ENCODE measurements at regions of chr3 and their contacts with region 1.

Region 1: DNA sequence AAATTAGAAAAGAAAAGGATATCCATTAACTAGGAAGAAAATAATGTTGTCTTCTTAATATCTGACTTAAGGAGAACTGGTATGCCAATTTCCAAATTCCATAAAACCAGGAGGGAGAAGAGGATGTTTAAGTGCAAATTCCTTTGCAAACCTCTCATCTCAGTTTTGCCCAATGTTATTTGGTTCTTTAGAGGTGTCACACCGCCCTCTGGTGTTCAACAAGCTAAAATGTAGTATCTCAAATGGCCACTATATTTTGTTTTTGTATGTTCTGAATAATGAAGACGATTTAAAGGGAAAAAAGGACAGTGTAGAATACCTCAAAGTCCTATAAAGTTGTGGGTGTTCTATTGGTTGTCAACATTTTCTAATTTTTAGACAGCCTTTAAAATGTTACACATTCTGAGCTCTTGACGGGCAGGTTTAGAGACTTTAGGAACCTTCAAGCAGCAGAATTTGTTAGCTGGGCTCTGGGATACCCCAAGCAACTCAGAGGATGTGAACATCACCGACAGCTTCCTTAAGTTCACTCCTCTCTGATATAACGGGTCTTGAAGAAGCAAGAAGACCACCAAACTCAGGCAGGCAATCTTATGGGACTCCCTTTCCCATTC is 458.3 kb downstream of the MFSD1 start:
- DNase-seq: no peak
- ATAC-seq: no peak
- H3K4me3 Mint-ChIP-seq: no peak overlapping the region
- H3K27ac Mint-ChIP-seq: no peak overlapping the region
- H3K4me1 Mint-ChIP-seq: no peaks in the 10 kb centered on the region
- H3K27me3 Mint-ChIP-seq: peaks cover 9% of the 10 kb centered on the region
- CTCF ChIP-seq: no peak

Region 2: GRCh38 chr3:158790901-158791589 is 469.1 kb before region 1 on chr3:
- CTCF ChIA-PET with region 1: interaction called, 5 read pairs
- POLR2A ChIA-PET with region 1: no interaction called
- intact Hi-C with region 1: loop called (anchors 1 kb)
- DNase-seq: no peak
- ATAC-seq: peak; percentile 56
- H3K4me3 Mint-ChIP-seq: peak overlapping the region; percentile 77
- H3K27ac Mint-ChIP-seq: no peak overlapping the region
- H3K4me1 Mint-ChIP-seq: peaks cover 3% of the 10 kb centered on the region
- H3K27me3 Mint-ChIP-seq: peaks cover 2% of the 10 kb centered on the region
- CTCF ChIP-seq: no peak

Region 3: GRCh38 chr3:158896729-158897128 is 363.4 kb before region 1 on chr3:
- CTCF ChIA-PET with region 1: no interaction called
- POLR2A ChIA-PET with region 1: no interaction called
- intact Hi-C with region 1: no loop called
- DNase-seq: no peak
- ATAC-seq: no peak
- H3K4me3 Mint-ChIP-seq: no peak overlapping the region
- H3K27ac Mint-ChIP-seq: no peak overlapping the region
- H3K4me1 Mint-ChIP-seq: no peaks in the 10 kb centered on the region
- H3K27me3 Mint-ChIP-seq: peaks cover 5% of the 10 kb centered on the region
- CTCF ChIP-seq: no peak

Region 4: GRCh38 chr3:158918008-158918407 is 342.1 kb before region 1 on chr3:
- CTCF ChIA-PET with region 1: interaction called, 4 read pairs
- POLR2A ChIA-PET with region 1: no interaction called
- intact Hi-C with region 1: loop called (anchors 1 kb)
- DNase-seq: no peak
- ATAC-seq: no peak
- H3K4me3 Mint-ChIP-seq: no peak overlapping the region
- H3K27ac Mint-ChIP-seq: no peak overlapping the region
- H3K4me1 Mint-ChIP-seq: no peaks in the 10 kb centered on the region
- H3K27me3 Mint-ChIP-seq: no peaks in the 10 kb centered on the region
- CTCF ChIP-seq: no peak

Region 5: DNA sequence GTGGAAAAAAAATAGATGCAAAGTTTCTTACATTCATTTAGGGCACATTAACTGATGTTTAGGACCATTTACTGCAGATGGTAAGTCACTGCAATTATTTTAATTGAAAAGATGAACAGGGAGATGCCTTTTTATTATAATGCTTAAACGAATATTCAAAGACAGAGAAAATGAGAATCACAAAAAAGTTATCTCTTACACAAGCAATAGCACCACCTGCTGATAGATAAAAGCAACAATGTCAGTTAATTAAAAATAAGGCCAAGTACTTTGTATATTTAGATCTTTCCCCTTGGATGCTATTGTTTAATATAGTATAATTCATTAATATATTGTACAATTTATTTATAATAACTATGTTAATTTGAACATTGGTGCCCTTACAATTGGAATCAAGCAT is 1083.0 kb after region 1 on chr3:
- CTCF ChIA-PET with region 1: no interaction called
- POLR2A ChIA-PET with region 1: no interaction called
- intact Hi-C with region 1: loop called (anchors 10 kb)
- DNase-seq: no peak
- ATAC-seq: no peak
- H3K4me3 Mint-ChIP-seq: no peak overlapping the region
- H3K27ac Mint-ChIP-seq: no peak overlapping the region
- H3K4me1 Mint-ChIP-seq: no peaks in the 10 kb centered on the region
- H3K27me3 Mint-ChIP-seq: no peaks in the 10 kb centered on the region
- CTCF ChIP-seq: no peak